ENCODE measurements at regions of chr4 and their contacts with region 1.

Region 1: DNA sequence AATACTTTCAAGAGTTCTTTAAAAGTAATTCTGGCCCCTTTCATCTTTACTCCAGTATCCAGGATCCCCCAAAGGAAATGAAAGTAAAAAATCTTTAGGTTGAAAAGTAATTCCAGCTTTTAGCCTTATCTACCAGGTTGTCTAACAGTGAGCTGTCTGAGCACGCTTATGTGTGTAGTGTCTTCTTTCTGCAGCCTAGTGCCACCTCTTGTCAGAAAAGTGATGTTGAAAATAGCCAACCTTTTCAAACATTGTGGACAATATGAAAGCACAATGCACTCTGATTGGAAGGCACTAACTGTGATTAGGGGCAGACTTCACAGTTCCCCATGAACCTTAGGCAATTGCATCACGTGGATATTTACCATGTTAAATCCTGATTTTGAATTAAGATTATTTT is 92.1 kb downstream of the RELL1 start:
- DNase-seq: no peak
- ATAC-seq: no peak
- H3K4me3 ChIP-seq: no peak overlapping the region
- H3K4me3 Mint-ChIP-seq: no peak overlapping the region
- H3K27ac ChIP-seq: no peak overlapping the region
- H3K27ac Mint-ChIP-seq: no peak overlapping the region
- H3K4me1 ChIP-seq: no peaks in the 10 kb centered on the region
- H3K4me1 Mint-ChIP-seq: no peaks in the 10 kb centered on the region
- H3K27me3 ChIP-seq: no peaks in the 10 kb centered on the region
- H3K27me3 Mint-ChIP-seq: no peaks in the 10 kb centered on the region
- CTCF ChIP-seq: no peak

Region 2: DNA sequence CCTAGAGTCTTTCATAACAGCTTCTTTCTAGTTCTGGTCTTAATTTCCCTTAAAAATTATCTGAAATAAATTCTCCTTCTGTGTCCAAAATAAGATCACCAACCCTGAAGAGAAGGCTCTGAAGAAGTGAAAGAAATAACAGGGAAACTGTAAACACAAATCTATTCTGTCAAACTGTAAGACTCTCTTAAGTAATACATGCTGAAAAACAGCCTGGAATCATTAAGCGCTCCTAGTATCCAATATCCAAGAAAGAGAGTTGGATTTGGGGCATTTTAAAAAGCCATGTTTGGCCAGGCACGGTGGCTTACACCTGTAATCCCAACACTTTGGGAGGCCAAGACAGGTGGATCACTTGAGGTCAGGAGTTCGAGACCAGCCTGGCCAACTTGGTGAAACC is 38.7 kb after region 1 on chr4:
- CTCF ChIA-PET with region 1: no interaction called
- POLR2A ChIA-PET with region 1: no interaction called
- intact Hi-C with region 1: loop called in 1 of 2 experiments (anchors 1 kb)
- DNase-seq: no peak
- ATAC-seq: no peak
- H3K4me3 ChIP-seq: no peak overlapping the region
- H3K4me3 Mint-ChIP-seq: no peak overlapping the region
- H3K27ac ChIP-seq: no peak overlapping the region
- H3K27ac Mint-ChIP-seq: no peak overlapping the region
- H3K4me1 ChIP-seq: no peaks in the 10 kb centered on the region
- H3K4me1 Mint-ChIP-seq: no peaks in the 10 kb centered on the region
- H3K27me3 ChIP-seq: no peaks in the 10 kb centered on the region
- H3K27me3 Mint-ChIP-seq: no peaks in the 10 kb centered on the region
- CTCF ChIP-seq: no peak